ENCODE measurements at regions of chr13 and their contacts with region 1.

Region 1: GRCh38 chr13:102596147-102597028 is at the start of gene TPP2:
- DNase-seq: peak; percentile 98
- H3K4me3 Mint-ChIP-seq: peak within 1 kb of the TSS; percentile 95
- H3K27ac Mint-ChIP-seq: peak within 1 kb of the TSS; percentile 100
- H3K4me1 Mint-ChIP-seq: peaks cover 63% of the 10 kb centered on the region
- H3K27me3 Mint-ChIP-seq: no peaks in the 10 kb centered on the region
- total RNA-seq, gene TPP2: 95.9 to 115 TPM

Region 2: GRCh38 chr13:102606537-102607309 is 10.3 kb after region 1 on chr13:
- CTCF ChIA-PET with region 1: interaction called, 20 read pairs
- POLR2A ChIA-PET with region 1: interaction called, 6 read pairs
- DNase-seq: no peak
- H3K4me3 Mint-ChIP-seq: no peak overlapping the region
- H3K27ac Mint-ChIP-seq: no peak overlapping the region
- H3K4me1 Mint-ChIP-seq: peaks cover 66% of the 10 kb centered on the region
- H3K27me3 Mint-ChIP-seq: no peaks in the 10 kb centered on the region

Region 3: DNA sequence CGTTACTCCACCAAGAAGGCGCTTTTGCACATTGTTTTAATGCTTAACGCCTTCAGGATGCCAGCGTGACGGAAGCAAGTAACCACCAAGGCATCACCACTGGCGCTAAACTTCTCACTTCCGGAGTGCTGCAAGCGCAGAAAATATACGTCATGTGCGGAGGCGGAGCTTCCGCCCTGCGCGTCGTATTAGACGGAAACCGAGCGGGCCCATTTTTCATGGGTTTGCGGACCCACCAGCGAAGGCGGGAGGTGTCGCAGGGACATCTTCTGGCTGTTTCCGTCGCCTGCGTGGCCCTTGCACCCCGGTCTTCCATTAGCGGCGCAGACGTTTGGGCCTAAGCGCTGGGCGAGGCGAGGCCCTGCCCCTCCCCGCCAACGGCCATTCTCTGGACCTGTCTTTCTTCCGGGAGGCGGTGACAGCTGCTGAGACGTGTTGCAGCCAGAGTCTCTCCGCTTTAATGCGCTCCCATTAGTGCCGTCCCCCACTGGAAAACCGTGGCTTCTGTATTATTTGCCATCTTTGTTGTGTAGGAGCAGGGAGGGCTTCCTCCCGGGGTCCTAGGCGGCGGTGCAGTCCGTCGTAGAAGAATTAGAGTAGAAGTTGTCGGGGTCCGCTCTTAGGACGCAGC is 249.4 kb after region 1 on chr13 and contains the start of gene ERCC5:
- CTCF ChIA-PET with region 1: interaction called, 22 read pairs
- POLR2A ChIA-PET with region 1: interaction called, 16 read pairs
- DNase-seq: peak; percentile 96
- H3K4me3 Mint-ChIP-seq: peak within 1 kb of the TSS; percentile 94
- H3K27ac Mint-ChIP-seq: peak within 1 kb of the TSS; percentile 99
- H3K4me1 Mint-ChIP-seq: peaks cover 42% of the 10 kb centered on the region
- H3K27me3 Mint-ChIP-seq: no peaks in the 10 kb centered on the region
- total RNA-seq, gene ERCC5: 92.6 to 94.9 TPM

Region 4: GRCh38 chr13:103431856-103432255 is 835.5 kb after region 1 on chr13:
- CTCF ChIA-PET with region 1: no interaction called
- POLR2A ChIA-PET with region 1: no interaction called
- DNase-seq: no peak
- H3K4me3 Mint-ChIP-seq: no peak overlapping the region
- H3K27ac Mint-ChIP-seq: no peak overlapping the region
- H3K4me1 Mint-ChIP-seq: no peaks in the 10 kb centered on the region
- H3K27me3 Mint-ChIP-seq: no peaks in the 10 kb centered on the region